ENCODE measurements at regions of chr21 and their contacts with region 1.

Region 1: GRCh38 chr21:42309753-42310221 is 5.4 kb downstream of the TFF3 start:
- DNase-seq: peak; percentile 88
- ATAC-seq: peak; percentile 89
- H3K4me3 Mint-ChIP-seq: no peak overlapping the region
- H3K27ac Mint-ChIP-seq: no peak overlapping the region
- H3K4me1 Mint-ChIP-seq: no peaks in the 10 kb centered on the region
- H3K27me3 Mint-ChIP-seq: peaks cover 2% of the 10 kb centered on the region

Region 2: DNA sequence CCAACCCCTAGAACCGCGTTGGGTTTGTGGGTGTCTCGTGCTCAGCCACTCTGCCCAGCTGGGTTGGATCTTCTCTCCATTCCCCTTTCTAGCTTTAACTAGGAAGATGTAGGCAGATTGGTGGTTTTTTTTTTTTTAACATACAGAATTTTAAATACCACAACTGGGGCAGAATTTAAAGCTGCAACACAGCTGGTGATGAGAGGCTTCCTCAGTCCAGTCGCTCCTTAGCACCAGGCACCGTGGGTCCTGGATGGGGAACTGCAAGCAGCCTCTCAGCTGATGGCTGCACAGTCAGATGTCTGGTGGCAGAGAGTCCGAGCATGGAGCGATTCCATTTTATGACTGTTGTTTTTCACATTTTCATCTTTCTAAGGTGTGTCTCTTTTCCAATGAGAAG is 13.3 kb before region 1 on chr21:
- CTCF ChIA-PET with region 1: interaction called, 18 read pairs
- POLR2A ChIA-PET with region 1: no interaction called
- intact Hi-C with region 1: no loop called
- DNase-seq: no peak
- ATAC-seq: no peak
- H3K4me3 Mint-ChIP-seq: no peak overlapping the region
- H3K27ac Mint-ChIP-seq: no peak overlapping the region
- H3K4me1 Mint-ChIP-seq: peaks cover 13% of the 10 kb centered on the region
- H3K27me3 Mint-ChIP-seq: no peaks in the 10 kb centered on the region